ENCODE measurements at regions of chr16 and their contacts with region 1.

Region 1: DNA sequence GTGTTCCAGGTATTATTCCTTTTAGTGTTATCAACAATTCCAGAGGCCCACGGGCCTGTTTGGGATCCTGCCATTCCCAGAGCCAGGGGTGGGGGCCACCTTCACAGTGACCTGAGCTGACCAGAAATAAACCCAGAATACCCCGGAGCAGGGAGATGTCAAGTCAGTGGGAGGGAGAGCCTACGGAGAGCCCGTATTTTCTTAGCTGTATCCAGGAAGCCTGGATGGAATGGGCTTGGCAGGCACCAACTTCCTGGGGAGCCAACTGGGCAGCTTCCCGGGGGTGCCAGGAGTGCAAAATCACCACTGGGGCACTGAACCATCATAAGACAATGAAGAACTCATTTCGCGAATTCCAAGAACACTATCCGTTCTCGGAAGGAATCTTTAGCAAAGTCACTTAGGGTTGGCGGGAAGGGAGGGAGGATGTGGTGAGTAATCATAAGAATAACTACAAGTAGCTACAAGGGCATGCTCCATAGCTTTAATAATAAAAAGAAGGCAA is 13.2 kb upstream of the MRTFB start:
- DNase-seq: peak; percentile 96
- H3K4me3 ChIP-seq: peak overlapping the region in 1 of 3 experiments; percentile 12
- H3K27ac ChIP-seq: peak overlapping the region; percentile 99
- H3K4me1 ChIP-seq: peaks cover 26% of the 10 kb centered on the region
- H3K27me3 ChIP-seq: no peaks in the 10 kb centered on the region
- CTCF ChIP-seq: no peak
- POLR2A ChIP-seq: peak; percentile 57

Region 2: GRCh38 chr16:13957197-13958078 is 100.5 kb before region 1 on chr16:
- CTCF ChIA-PET with region 1: interaction called, 5 read pairs
- POLR2A ChIA-PET with region 1: no interaction called
- dilution Hi-C with region 1: no loop called
- intact Hi-C with region 1: loop called (anchors 1 kb)
- DNase-seq: peak; percentile 91
- H3K4me3 ChIP-seq: peak overlapping the region in 1 of 3 experiments; percentile 37
- H3K27ac ChIP-seq: peak overlapping the region; percentile 88
- H3K4me1 ChIP-seq: peaks cover 16% of the 10 kb centered on the region
- H3K27me3 ChIP-seq: no peaks in the 10 kb centered on the region
- CTCF ChIP-seq: no peak
- POLR2A ChIP-seq: no peak

Region 3: DNA sequence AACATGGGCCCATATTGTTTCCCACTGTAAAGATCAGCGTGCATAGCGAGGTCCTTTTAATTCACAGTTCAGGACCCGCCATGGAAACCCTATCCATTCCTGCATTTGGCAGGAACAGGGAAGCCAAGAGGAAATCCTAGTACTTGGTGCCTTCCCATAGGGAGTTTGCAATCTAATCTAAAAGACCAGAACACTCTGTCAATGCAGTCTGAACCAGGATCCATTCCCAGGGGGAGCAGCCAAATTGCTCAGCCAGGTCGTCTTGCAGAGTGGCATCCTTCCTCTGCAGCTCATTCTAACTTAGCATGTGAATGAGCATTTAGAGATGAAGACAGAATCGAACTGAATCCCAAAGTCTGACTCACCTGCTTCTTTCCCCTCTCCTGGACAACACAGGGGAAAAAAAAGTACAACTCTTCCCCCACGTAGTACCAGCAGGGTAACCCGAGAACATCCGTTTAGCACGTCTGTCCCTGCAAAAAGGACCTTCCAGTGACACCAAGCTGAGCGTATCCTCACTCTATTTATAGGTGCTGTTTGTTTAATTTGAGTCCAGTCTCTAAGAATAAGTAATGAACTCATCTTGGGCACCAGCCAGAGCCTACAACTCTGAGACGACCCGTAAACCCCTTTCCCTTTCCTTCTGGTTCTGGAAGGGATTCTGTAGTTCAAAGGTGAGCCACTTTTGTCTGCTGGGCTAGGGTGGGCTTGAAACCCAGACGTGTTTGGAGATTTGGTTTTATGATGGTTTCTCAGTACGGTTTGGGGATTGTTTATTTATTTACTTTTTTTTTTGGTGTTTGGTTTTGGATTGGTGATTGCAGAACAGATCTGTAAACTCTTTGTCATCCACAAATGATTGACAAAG is 63.5 kb before region 1 on chr16:
- CTCF ChIA-PET with region 1: no interaction called
- POLR2A ChIA-PET with region 1: no interaction called
- dilution Hi-C with region 1: no loop called
- intact Hi-C with region 1: no loop called
- DNase-seq: peak; percentile 28
- H3K4me3 ChIP-seq: no peak overlapping the region
- H3K27ac ChIP-seq: no peak overlapping the region
- H3K4me1 ChIP-seq: peaks cover 7% of the 10 kb centered on the region
- H3K27me3 ChIP-seq: peaks cover 3 to 7% of the 10 kb centered on the region in 2 experiments
- CTCF ChIP-seq: no peak
- POLR2A ChIP-seq: no peak

Region 4: GRCh38 chr16:14015948-14016347 is 42.0 kb before region 1 on chr16:
- CTCF ChIA-PET with region 1: interaction called, 6 read pairs
- POLR2A ChIA-PET with region 1: interaction called, 3 read pairs
- dilution Hi-C with region 1: no loop called
- intact Hi-C with region 1: loop called (anchors 1 kb)
- DNase-seq: peak; percentile 73
- H3K4me3 ChIP-seq: no peak overlapping the region
- H3K27ac ChIP-seq: no peak overlapping the region
- H3K4me1 ChIP-seq: peaks cover 19% of the 10 kb centered on the region
- H3K27me3 ChIP-seq: peaks cover 0 to 2% of the 10 kb centered on the region in 2 experiments
- CTCF ChIP-seq: no peak
- POLR2A ChIP-seq: no peak

Region 5: GRCh38 chr16:14088155-14088753 is 30.3 kb after region 1 on chr16:
- CTCF ChIA-PET with region 1: no interaction called
- POLR2A ChIA-PET with region 1: no interaction called
- dilution Hi-C with region 1: no loop called
- intact Hi-C with region 1: no loop called
- DNase-seq: no peak
- H3K4me3 ChIP-seq: no peak overlapping the region
- H3K27ac ChIP-seq: no peak overlapping the region
- H3K4me1 ChIP-seq: peaks cover 12% of the 10 kb centered on the region
- H3K27me3 ChIP-seq: no peaks in the 10 kb centered on the region
- CTCF ChIP-seq: no peak
- POLR2A ChIP-seq: no peak

Region 6: DNA sequence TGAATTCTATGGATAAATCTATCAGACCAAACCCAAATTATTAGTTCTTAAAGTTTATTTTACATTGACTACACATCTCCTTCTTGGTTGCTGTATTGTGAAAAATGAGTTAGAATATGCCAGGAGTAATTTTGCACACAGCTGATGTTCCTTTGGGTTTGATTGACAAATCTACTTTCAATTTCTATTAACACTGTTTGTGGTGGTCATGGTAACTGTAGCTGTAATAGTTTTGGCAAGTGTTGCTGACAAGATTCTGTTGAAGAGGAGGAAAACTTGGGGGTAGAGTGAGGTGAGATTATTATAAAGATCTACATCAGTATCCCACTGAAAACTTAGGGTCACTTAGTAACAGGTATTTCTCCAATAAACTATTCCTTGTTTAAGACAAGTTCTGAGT is 43.5 kb after region 1 on chr16:
- CTCF ChIA-PET with region 1: no interaction called
- POLR2A ChIA-PET with region 1: no interaction called
- dilution Hi-C with region 1: no loop called
- intact Hi-C with region 1: no loop called
- DNase-seq: no peak
- H3K4me3 ChIP-seq: no peak overlapping the region
- H3K27ac ChIP-seq: no peak overlapping the region
- H3K4me1 ChIP-seq: peaks cover 12% of the 10 kb centered on the region
- H3K27me3 ChIP-seq: no peaks in the 10 kb centered on the region
- CTCF ChIP-seq: no peak
- POLR2A ChIP-seq: no peak

Region 7: GRCh38 chr16:14186007-14186794 is 128.3 kb after region 1 on chr16:
- CTCF ChIA-PET with region 1: interaction called, 4 read pairs
- POLR2A ChIA-PET with region 1: no interaction called
- dilution Hi-C with region 1: no loop called
- intact Hi-C with region 1: loop called (anchors 5 kb)
- DNase-seq: peak; percentile 78
- H3K4me3 ChIP-seq: no peak overlapping the region
- H3K27ac ChIP-seq: no peak overlapping the region
- H3K4me1 ChIP-seq: peaks cover 19% of the 10 kb centered on the region
- H3K27me3 ChIP-seq: no peaks in the 10 kb centered on the region
- CTCF ChIP-seq: peak; percentile 28 to 48
- POLR2A ChIP-seq: no peak

Region 8: GRCh38 chr16:14632692-14633569 is 575.0 kb after region 1 on chr16 and contains the start of gene BFAR:
- CTCF ChIA-PET with region 1: no interaction called
- POLR2A ChIA-PET with region 1: no interaction called
- dilution Hi-C with region 1: no loop called
- intact Hi-C with region 1: loop called (anchors 5 kb)
- DNase-seq: peak; percentile 97
- H3K4me3 ChIP-seq: peak within 1 kb of the TSS; percentile 85 to 95 (median 92)
- H3K27ac ChIP-seq: peak within 1 kb of the TSS; percentile 78
- H3K4me1 ChIP-seq: peaks cover 27% of the 10 kb centered on the region
- H3K27me3 ChIP-seq: no peaks in the 10 kb centered on the region
- CTCF ChIP-seq: no peak
- POLR2A ChIP-seq: peak; percentile 96
- total RNA-seq, gene BFAR: 73.5 and 84.6 TPM in 2 replicates

Measured in endothelial cell of umbilical vein (primary cell).